ENCODE measurements at regions of chr1 and their contacts with region 1.

Region 1: DNA sequence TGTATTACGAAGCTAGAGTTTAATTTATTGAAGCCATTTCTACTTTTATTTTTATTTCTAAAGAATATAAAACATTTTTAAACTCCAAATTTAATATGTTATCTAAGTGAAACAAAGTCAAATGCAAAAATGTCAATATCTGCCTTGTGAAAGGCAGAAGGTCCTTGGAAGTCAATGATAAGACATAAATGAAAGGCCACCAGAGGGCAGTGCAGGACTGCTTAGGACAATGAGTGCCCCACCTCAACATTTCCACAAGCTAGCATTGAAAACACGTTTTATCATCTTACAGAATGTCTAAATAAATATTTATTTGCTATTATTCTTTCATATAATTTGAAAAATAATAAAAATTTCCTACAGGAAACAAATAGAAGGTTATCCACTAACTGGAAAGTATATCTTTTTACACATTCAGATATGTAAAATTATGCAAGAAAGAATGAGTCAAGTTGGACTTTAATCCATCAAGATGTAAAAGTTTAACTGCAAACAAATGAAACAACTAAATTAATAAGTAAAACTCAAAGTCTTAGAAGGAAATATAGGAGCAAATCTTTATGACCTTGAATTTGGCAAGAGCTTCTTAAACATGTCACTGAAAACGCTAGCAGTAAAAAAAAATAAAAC is 140.1 kb upstream of the FMN2 start:
- DNase-seq: peak; percentile 90
- ATAC-seq: peak; percentile 67
- H3K4me3 ChIP-seq: no peak overlapping the region
- H3K27ac ChIP-seq: no peak overlapping the region
- H3K4me1 ChIP-seq: peaks cover 6% of the 10 kb centered on the region; the same call in 1 of the 2 replicates
- H3K27me3 ChIP-seq: no peaks in the 10 kb centered on the region
- CTCF ChIP-seq: peak; percentile 73

Region 2: DNA sequence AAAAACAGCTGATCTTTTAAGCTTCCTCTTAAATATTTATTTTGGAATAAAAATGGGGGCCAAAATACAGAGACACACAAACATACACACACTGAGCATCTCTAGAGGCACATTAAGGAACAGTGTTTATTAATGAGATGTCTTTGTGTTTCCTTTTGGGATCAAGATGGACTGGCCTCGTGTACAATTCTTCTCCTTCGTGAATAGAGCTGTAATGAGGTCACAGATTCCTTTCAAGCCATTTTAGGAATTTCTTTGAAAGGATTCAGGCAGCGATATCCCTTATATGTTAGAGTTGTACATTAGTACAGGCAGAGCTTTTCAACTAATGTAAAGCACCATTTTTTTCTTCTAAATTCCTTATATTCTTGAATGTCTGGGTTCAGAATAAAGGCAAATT is 269.6 kb before region 1 on chr1:
- CTCF ChIA-PET with region 1: no interaction called
- POLR2A ChIA-PET with region 1: no interaction called
- intact Hi-C with region 1: no loop called
- DNase-seq: no peak
- ATAC-seq: no peak
- H3K4me3 ChIP-seq: no peak overlapping the region
- H3K27ac ChIP-seq: peak overlapping the region; percentile 57
- H3K4me1 ChIP-seq: peaks cover 30% of the 10 kb centered on the region
- H3K27me3 ChIP-seq: no peaks in the 10 kb centered on the region
- CTCF ChIP-seq: no peak

Region 3: DNA sequence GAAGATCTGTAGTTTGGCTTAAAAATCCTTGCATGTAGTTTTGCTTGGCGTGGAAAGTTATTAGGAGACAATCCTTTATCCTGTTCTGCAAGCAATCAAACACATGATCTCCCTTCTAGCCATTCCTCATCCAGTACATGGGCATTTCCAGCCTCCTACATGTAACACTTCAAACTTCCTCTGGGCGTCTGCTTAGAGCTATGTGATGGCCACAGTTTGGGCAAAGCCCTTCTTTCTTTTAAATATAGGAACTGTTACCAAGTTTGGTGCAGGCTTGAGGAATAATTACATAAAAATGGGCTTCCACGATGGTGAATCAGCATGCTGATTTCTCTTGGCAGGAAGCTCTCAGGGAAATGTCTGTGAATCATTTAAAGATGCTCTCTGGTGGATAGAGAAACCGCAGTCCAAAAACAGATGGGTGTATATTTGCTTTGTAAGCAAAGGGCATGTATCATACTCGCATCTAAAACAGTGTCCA is 36.8 kb before region 1 on chr1:
- CTCF ChIA-PET with region 1: interaction called, 14 read pairs
- POLR2A ChIA-PET with region 1: no interaction called
- intact Hi-C with region 1: no loop called
- DNase-seq: peak; percentile 98
- ATAC-seq: peak; percentile 83
- H3K4me3 ChIP-seq: no peak overlapping the region
- H3K27ac ChIP-seq: peak overlapping the region; percentile 73
- H3K4me1 ChIP-seq: peaks cover 44% of the 10 kb centered on the region
- H3K27me3 ChIP-seq: no peaks in the 10 kb centered on the region
- CTCF ChIP-seq: peak; percentile 50

Region 4: DNA sequence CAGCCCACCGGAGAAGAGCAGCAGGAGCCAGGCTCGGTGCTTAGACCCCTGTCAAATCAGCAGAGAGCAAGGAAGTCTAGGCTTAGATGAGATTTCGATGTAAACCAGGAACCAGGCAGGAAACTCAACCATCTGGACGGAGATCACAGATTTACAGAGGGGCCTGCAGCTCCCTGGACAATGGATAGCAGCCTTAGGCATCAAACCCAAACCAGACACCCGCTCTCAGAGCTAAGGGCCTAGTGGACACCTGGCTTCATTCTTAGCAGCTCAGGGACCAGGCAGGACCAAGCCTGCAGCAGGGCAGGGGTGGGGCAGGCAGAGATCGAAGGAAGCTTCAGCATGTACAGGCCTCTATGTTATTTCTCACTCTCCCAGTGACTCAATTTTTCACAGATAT is 12.2 kb after region 1 on chr1:
- CTCF ChIA-PET with region 1: no interaction called
- POLR2A ChIA-PET with region 1: no interaction called
- intact Hi-C with region 1: no loop called
- DNase-seq: no peak
- ATAC-seq: no peak
- H3K4me3 ChIP-seq: no peak overlapping the region
- H3K27ac ChIP-seq: no peak overlapping the region
- H3K4me1 ChIP-seq: no peaks in the 10 kb centered on the region
- H3K27me3 ChIP-seq: peaks cover 35% of the 10 kb centered on the region
- CTCF ChIP-seq: no peak

Region 5: GRCh38 chr1:239976130-239976968 is 24.7 kb after region 1 on chr1:
- CTCF ChIA-PET with region 1: interaction called, 15 read pairs
- POLR2A ChIA-PET with region 1: no interaction called
- intact Hi-C with region 1: loop called (anchors 1 kb)
- DNase-seq: peak; percentile 86
- ATAC-seq: peak; percentile 84
- H3K4me3 ChIP-seq: no peak overlapping the region
- H3K27ac ChIP-seq: no peak overlapping the region
- H3K4me1 ChIP-seq: peaks cover 6% of the 10 kb centered on the region; the same call in 1 of the 2 replicates
- H3K27me3 ChIP-seq: peaks cover under 1% of the 10 kb centered on the region; the same call in 1 of the 2 replicates
- CTCF ChIP-seq: peak; percentile 99

Region 6: DNA sequence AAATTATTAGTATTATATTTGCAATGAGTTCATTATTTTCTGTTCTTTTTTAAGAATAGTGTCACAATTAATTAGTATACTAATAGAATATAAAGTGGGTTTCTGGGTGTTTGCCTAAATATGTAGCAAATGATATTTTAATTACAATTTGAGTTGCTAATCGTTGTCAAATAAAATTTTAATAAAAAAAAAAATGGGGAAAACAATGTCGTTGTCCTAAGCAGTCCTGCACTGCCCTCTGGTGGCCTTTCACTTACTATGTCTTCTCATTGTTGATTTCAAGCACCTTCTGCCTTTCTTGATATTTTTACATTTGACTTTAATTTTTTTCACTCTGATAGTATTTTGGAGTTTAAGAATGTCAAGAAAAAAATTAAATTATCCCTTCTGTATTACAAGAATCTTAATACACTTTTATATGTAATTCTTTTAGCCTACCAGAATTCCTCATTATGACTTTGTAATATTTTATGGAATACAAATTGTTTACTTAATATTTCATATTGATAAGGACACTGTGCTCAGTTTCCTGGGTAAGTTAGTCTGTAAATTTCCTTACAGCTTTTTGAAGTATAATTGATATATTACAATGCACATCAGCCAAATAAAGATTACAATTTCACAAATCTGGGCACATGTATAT is 35.6 kb after region 1 on chr1:
- CTCF ChIA-PET with region 1: no interaction called
- POLR2A ChIA-PET with region 1: no interaction called
- intact Hi-C with region 1: loop called (anchors 1 kb)
- DNase-seq: peak; percentile 78
- ATAC-seq: 0 out of 2 replicates have a peak, but pooled peaks have one; percentile 33
- H3K4me3 ChIP-seq: no peak overlapping the region
- H3K27ac ChIP-seq: no peak overlapping the region
- H3K4me1 ChIP-seq: no peaks in the 10 kb centered on the region
- H3K27me3 ChIP-seq: no peaks in the 10 kb centered on the region
- CTCF ChIP-seq: peak; percentile 88

Region 7: GRCh38 chr1:240004086-240004749 is 52.6 kb after region 1 on chr1:
- CTCF ChIA-PET with region 1: interaction called, 24 read pairs
- POLR2A ChIA-PET with region 1: no interaction called
- intact Hi-C with region 1: loop called (anchors 1 kb)
- DNase-seq: peak; percentile 67
- ATAC-seq: no peak
- H3K4me3 ChIP-seq: no peak overlapping the region
- H3K27ac ChIP-seq: no peak overlapping the region
- H3K4me1 ChIP-seq: peaks cover 28% of the 10 kb centered on the region
- H3K27me3 ChIP-seq: no peaks in the 10 kb centered on the region
- CTCF ChIP-seq: peak; percentile 90

Measured in PC-3 (cell line).